CD4-positive, alpha-beta T cell (primary cell): ENCODE measurements at regions of chr3 and their contacts with region 1.

Region 1: GRCh38 chr3:10263646-10264363 is 15.5 kb downstream of the TATDN2 start:
- DNase-seq: peak; percentile 36 to 83 (median 64)
- ATAC-seq: peak; percentile 93
- H3K4me3 ChIP-seq: peak overlapping the region; percentile 41
- H3K4me3 Mint-ChIP-seq: peak overlapping the region; percentile 60
- H3K27ac ChIP-seq: peak overlapping the region; percentile 64 to 79
- H3K27ac Mint-ChIP-seq: peak overlapping the region; percentile 87
- H3K4me1 ChIP-seq: peaks cover 63% of the 10 kb centered on the region
- H3K4me1 Mint-ChIP-seq: peaks cover 86% of the 10 kb centered on the region
- H3K27me3 ChIP-seq: no peaks in the 10 kb centered on the region
- H3K27me3 Mint-ChIP-seq: no peaks in the 10 kb centered on the region
- CTCF ChIP-seq: peak; percentile 68

Region 2: GRCh38 chr3:10026084-10026890 is 237.5 kb before region 1 on chr3 and contains the start of gene FANCD2:
- CTCF ChIA-PET with region 1: no interaction called
- POLR2A ChIA-PET with region 1: no interaction called
- intact Hi-C with region 1: loop called in 1 of 2 experiments (anchors 10 kb)
- DNase-seq: peak; percentile 82 to 97 (median 91)
- ATAC-seq: peak; percentile 91
- H3K4me3 ChIP-seq: peak within 1 kb of the TSS; percentile 87
- H3K4me3 Mint-ChIP-seq: peak within 1 kb of the TSS; percentile 98
- H3K27ac ChIP-seq: peak within 1 kb of the TSS; percentile 70 to 84
- H3K27ac Mint-ChIP-seq: peak within 1 kb of the TSS; percentile 98
- H3K4me1 ChIP-seq: peaks cover 33% of the 10 kb centered on the region
- H3K4me1 Mint-ChIP-seq: peaks cover 35% of the 10 kb centered on the region
- H3K27me3 ChIP-seq: no peaks in the 10 kb centered on the region
- H3K27me3 Mint-ChIP-seq: no peaks in the 10 kb centered on the region
- CTCF ChIP-seq: no peak
- total RNA-seq, gene FANCD2: 13.8 to 16.8 TPM

Region 3: DNA sequence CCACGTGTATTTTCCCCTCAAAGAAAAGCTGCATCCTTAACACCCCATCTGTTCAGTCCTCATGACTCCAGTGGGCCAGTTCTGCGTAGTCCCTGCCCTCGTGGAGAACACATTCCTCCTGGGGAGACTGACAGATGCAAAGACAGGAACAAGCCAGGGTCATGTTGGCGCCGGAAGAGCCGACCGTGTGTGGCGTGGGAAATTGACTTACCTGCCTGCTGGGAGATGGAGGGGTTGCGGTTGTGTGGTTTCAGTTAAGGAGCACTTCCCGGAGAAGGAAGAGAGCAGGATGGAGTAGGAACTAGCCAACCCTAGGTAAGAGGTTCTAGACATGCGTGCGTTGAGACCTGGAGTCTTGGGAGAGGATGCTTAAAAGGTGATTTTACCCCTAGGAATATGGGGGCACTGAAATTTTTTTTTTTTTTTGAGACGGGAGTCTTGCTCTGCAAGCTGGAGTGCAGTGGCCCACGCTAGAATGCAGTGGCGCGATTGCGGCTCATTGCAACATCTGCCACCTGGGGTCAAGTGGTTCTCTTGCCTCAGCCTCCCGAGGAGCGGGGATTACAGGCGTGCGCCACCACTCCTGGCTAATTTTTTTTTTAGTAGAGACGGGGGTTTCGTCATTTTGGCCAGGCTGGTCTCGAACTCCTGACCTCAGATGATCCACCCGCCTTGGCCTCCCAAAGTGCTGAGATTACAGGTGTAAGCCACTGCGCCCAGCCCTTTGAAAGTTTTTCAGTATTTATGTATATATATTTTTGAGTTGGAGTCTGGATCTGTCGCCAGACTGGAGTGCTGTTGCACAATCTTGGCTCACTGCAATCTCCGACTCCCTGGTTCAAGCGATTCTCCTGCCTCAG is 120.9 kb before region 1 on chr3:
- CTCF ChIA-PET with region 1: no interaction called
- POLR2A ChIA-PET with region 1: interaction called, 17 read pairs
- intact Hi-C with region 1: loop called in 1 of 2 experiments (anchors 5 kb)
- DNase-seq: peak in 5 of 14 experiments; percentile 1 to 54 (median 42)
- ATAC-seq: no peak
- H3K4me3 ChIP-seq: peak overlapping the region; percentile 85
- H3K4me3 Mint-ChIP-seq: peak overlapping the region; percentile 90
- H3K27ac ChIP-seq: peak overlapping the region in 1 of 2 donors; percentile 22
- H3K27ac Mint-ChIP-seq: peak overlapping the region; percentile 85
- H3K4me1 ChIP-seq: peaks cover 54% of the 10 kb centered on the region
- H3K4me1 Mint-ChIP-seq: peaks cover 40% of the 10 kb centered on the region
- H3K27me3 ChIP-seq: no peaks in the 10 kb centered on the region
- H3K27me3 Mint-ChIP-seq: no peaks in the 10 kb centered on the region
- CTCF ChIP-seq: no peak

Region 4: DNA sequence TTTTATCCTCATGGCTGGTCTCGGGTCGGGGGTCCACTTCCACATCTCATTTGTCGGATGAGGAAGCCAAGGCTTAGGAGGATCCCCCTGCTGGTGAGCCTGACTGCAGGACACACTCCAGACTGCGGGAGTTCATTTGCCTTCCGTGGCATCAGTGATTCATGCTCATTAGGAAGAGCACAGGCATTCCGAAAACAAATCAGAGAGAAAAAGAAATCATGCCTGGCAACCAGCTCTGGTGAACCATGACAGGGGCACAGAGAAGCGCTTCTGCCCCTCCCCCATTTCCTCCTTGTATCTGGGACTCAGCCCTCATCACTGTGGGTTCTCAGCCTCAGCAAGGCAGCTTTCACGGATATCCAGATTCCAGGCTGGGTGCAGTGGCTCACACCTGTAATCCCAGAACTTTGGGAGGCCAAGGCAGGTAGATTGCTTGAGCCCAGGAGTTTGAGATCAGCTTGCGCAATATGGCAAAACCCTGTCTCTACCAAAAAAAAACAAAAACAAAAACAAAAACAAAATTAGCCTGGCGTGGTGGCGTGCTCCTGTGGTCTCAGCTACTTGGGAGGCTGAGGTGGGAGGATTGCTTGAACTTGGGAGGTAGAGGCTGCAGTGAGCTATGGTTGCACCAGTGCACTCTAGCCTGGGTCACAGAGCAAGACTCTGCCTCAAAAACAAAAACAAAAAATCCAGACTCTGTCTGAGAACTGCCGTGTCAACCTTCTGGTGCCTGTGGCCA is 70.7 kb before region 1 on chr3:
- CTCF ChIA-PET with region 1: interaction called, 6 read pairs
- POLR2A ChIA-PET with region 1: interaction called, 10 read pairs
- intact Hi-C with region 1: loop called in 1 of 2 experiments (anchors 5 kb)
- DNase-seq: peak in 13 of 14 experiments; percentile 33 to 83 (median 62)
- ATAC-seq: peak; percentile 51
- H3K4me3 ChIP-seq: peak overlapping the region; percentile 7
- H3K4me3 Mint-ChIP-seq: peak overlapping the region; percentile 86
- H3K27ac ChIP-seq: peak overlapping the region; percentile 89 to 90
- H3K27ac Mint-ChIP-seq: peak overlapping the region; percentile 96
- H3K4me1 ChIP-seq: peaks cover 96% of the 10 kb centered on the region
- H3K4me1 Mint-ChIP-seq: peaks cover 81% of the 10 kb centered on the region
- H3K27me3 ChIP-seq: no peaks in the 10 kb centered on the region
- H3K27me3 Mint-ChIP-seq: no peaks in the 10 kb centered on the region
- CTCF ChIP-seq: no peak

Region 5: DNA sequence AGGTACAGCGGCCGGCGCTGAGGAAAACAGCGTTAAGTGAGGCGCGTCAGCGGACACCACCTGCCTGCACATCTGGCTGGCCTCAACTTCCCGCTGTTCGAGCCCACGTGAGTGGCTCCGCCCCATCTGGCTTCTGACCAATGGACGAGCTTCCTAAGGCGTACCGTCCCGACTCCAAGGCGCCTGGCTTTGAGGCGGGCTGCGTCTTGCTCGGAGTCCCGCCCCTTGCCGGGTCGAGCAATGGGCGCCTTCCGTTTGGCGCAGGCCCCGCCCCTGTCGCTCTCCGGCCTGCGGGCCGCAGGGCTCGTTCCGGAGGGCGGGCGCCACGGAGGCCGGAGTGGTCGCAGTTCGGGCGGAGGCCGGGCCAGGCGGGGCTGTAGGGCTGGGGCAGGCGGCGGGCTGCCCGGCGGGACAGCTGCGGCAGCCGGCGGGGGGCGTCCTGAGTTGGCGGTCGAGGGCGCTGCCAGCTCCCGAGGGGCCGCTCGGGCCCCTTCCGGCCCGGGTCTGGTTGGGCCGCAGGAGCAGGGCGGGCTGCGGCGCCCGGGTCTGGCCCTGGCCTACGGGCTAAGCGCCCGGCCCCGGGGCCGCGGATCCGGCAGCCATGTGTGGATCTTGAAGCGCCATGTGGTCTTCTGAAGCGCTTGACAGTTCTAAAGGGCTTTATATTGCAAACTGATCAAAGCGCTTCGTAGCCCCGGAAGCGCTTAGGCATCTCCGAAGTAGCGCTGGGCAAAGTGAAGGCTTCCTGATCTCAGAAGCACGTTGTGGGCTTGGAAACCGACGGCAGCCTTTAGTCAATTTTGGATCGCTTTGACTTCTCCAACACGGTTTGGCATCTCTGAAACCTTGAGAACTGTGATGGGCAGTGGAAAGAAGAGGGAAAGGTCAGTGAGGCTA is 15.4 kb before region 1 on chr3 and contains the start of gene TATDN2:
- CTCF ChIA-PET with region 1: interaction called, 35 read pairs
- POLR2A ChIA-PET with region 1: interaction called, 85 read pairs
- intact Hi-C with region 1: loop called (anchors 2 kb)
- DNase-seq: peak; percentile 81 to 98 (median 90)
- ATAC-seq: peak; percentile 93
- H3K4me3 ChIP-seq: peak within 1 kb of the TSS; percentile 83
- H3K4me3 Mint-ChIP-seq: peak within 1 kb of the TSS; percentile 97
- H3K27ac ChIP-seq: peak within 1 kb of the TSS; percentile 63 to 83
- H3K27ac Mint-ChIP-seq: peak within 1 kb of the TSS; percentile 90
- H3K4me1 ChIP-seq: peaks cover 56% of the 10 kb centered on the region
- H3K4me1 Mint-ChIP-seq: peaks cover 60% of the 10 kb centered on the region
- H3K27me3 ChIP-seq: no peaks in the 10 kb centered on the region
- H3K27me3 Mint-ChIP-seq: no peaks in the 10 kb centered on the region
- CTCF ChIP-seq: no peak
- total RNA-seq, gene TATDN2: 48.7 to 50.2 TPM